HEK293T (cell line): ENCODE measurements at regions of chr7 and their contacts with region 1.

Region 1: DNA sequence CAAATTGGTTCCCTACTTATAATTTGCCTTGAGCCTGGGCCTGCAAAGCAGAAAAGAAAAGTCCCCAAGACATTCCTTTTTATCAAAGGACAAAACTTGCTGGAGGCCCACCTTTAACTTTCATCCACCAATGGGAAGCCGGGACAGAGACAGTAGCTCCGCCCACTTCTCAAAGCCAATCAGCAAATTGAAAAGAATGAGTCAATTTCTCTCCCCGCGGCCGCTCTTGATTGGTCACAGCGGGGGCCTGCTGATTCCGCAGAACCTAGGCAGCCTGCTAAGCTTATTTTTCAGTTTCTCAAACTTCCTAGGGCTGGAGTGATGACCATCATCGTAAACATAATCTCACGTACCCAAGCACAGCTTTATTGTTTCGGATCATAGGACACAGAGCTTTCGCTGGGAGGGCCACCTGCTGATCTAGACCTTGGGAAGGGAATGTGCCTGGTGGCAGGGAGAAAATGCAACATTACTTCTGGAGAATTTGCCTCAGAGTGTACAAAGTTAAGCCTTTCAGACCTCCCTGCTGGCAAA is at the start of gene SLC13A4:
- DNase-seq: peak; percentile 96

Region 2: GRCh38 chr7:135490783-135491182 is 237.4 kb before region 1 on chr7:
- CTCF ChIA-PET with region 1: no interaction called
- POLR2A ChIA-PET with region 1: no interaction called
- DNase-seq: no peak

Region 3: DNA sequence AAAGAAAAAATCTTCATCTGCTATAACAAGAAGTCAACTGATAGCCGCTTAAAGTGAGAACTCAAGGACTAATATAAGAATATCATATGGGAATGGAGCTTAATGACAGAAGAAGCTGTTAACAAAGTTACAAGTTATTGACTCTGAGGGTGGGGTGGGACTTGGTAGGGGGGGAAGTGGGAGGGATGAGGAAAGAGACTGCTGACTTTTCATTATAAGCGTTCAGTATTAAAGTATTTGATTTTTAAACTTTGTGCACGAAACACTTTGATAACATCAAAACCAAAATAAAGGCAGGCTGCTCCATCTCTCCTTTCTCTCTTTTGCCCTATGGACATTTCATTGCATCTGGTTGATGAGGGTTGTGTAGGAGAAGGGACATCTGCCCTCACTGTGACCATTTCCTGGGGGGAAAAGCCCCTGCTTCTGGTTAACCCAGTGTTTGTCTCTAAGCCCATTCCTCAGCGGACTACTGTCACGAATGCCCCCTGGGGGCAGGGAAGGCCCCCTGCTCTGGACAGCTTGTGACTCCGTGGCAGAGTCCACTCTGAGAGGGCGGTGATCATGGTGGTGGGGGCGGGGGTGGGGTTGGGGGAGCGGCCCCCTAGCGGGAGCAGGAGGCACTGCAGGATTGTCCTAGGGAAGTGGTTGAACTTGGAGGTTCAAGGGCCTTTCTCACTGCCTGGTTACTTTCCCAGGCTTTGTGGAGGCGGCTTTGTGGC is 17.6 kb before region 1 on chr7:
- CTCF ChIA-PET with region 1: interaction called, 28 read pairs
- POLR2A ChIA-PET with region 1: interaction called, 3 read pairs
- DNase-seq: peak; percentile 85

Region 4: DNA sequence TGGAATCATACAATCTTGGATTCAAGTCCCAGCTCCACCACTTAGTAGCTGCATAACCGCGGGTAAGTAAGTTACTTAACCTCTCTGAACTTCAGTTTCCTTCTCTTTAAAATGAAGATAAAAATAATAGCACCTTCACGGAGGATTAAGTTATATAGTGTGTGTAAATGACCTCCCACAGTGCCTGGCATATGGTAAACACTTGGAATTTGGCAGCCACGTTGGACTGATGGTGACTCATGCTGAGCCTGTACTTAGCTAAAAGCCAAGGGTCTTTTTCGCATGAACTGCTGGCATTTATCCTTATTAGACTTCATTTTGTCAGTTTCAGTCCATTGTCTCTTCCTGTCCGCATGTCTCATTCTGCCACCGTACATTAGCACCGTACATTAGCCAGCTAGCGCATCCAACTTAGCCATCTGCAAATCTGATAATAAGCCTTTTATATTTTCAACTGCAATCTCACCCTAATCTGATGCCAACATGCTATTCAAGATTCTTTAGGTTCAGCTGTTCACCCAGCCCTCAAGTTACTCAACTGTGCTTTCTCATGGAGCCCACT is 11.4 kb before region 1 on chr7:
- CTCF ChIA-PET with region 1: interaction called, 28 read pairs
- POLR2A ChIA-PET with region 1: interaction called, 12 read pairs
- DNase-seq: peak; percentile 65

Region 5: DNA sequence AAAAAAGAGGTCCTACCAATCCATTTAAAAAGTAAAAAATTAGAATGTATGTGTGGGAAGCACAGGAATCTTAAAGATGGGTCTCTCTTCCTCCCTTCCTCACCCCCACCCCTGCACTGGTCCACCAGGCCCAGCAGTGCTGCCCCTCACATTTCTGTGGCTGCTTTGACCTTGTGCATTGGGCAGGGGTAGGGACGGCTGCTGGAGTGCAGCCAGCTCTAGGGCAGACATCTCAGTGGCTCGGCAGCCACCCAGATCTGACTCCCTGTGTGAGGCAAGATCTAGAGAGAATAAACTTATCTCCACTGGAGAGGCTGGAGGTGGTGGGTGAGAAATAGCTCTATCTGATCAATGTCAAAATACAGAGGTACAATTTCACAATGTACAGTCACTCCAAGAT is 13.7 kb after region 1 on chr7:
- CTCF ChIA-PET with region 1: interaction called, 4 read pairs
- POLR2A ChIA-PET with region 1: interaction called, 17 read pairs
- DNase-seq: no peak